ENCODE measurements at regions of chr22 and their contacts with region 1.

Region 1: DNA sequence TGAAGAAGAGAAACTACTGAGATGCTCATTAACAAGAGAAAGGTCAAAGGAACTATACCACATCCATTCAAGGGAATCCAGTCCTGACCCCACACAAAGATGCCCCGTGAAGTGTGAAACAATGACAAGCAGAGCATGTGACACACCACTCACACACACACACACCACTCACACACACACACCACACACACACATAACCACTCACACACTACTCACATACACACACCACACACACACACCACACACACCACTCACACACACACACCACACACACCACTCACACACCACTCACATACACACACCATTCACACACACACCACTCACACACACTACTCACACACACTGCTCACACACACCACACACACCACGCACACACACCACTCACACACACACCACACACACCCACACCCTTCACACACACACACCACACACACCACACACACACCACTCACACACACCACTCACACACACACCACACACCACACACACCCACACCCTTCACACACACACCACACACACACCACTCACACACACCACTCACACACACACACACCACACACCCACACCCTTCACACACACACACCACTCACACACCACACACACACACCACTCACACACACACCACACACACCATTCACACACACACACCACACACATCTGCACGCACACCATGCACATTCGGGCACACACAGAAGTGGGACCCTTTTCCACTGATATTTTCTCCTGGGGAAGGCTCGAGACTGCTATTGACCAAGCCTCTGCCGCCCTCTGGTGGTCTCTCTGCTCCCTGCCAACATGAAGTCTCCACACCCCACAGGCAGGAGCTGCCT is 32.0 kb upstream of the COMT start:
- DNase-seq: peak; percentile 69 to 97 (median 88)

Region 2: GRCh38 chr22:19730655-19731360 is 178.8 kb before region 1 on chr22:
- intact Hi-C with region 1: loop called (anchors 1 kb)
- DNase-seq: peak; percentile 72 to 98 (median 90)

Region 3: GRCh38 chr22:19844377-19845053 is 65.0 kb before region 1 on chr22:
- intact Hi-C with region 1: no loop called
- DNase-seq: peak in 3 of 10 donors; percentile 19 to 92 (median 56)

Region 4: GRCh38 chr22:19941365-19942082 is 32.0 kb after region 1 on chr22 and contains the starts of genes COMT and TXNRD2:
- intact Hi-C with region 1: no loop called
- DNase-seq: peak; percentile 32 to 93 (median 64)

Measured in posterior cingulate gyrus (tissue), 11 donors.